ENCODE measurements at regions of chr12 and their contacts with region 1.

Region 1: GRCh38 chr12:17763366-17763765 is 326.6 kb downstream of the RERGL start:
- DNase-seq: no peak
- ATAC-seq: no peak
- H3K4me3 ChIP-seq: no peak overlapping the region
- H3K27ac ChIP-seq: no peak overlapping the region
- H3K4me1 ChIP-seq: no peaks in the 10 kb centered on the region
- H3K27me3 ChIP-seq: no peaks in the 10 kb centered on the region

Region 2: GRCh38 chr12:17853054-17853453 is 89.7 kb after region 1 on chr12:
- intact Hi-C with region 1: loop called (anchors 5 kb)
- DNase-seq: no peak
- ATAC-seq: no peak
- H3K4me3 ChIP-seq: no peak overlapping the region
- H3K27ac ChIP-seq: no peak overlapping the region
- H3K4me1 ChIP-seq: no peaks in the 10 kb centered on the region
- H3K27me3 ChIP-seq: no peaks in the 10 kb centered on the region

Region 3: DNA sequence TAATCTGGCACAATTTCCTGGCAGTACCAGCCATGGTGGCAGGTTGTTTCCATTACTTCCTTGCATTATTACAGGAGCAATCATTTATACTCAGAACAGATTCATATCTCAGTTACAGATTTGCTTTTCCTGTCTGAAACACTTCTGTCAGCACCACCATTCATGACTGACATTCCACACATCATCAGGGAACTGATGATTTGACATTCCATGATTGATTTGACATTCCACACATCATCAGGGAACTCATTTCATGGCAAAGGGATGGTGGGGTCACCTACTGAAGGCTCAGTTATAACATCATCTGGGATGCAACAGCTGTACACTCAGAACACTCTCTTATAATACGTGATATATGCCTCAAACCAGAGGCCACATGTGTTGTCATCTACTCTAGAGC is 357.5 kb after region 1 on chr12:
- intact Hi-C with region 1: no loop called
- DNase-seq: no peak
- ATAC-seq: no peak
- H3K4me3 ChIP-seq: no peak overlapping the region
- H3K27ac ChIP-seq: no peak overlapping the region
- H3K4me1 ChIP-seq: no peaks in the 10 kb centered on the region
- H3K27me3 ChIP-seq: no peaks in the 10 kb centered on the region